Heart left ventricle (tissue), 16 donors: ENCODE measurements at regions of chr16 and their contacts with region 1.

Region 1: GRCh38 chr16:26729951-26730541 is 336.7 kb upstream of the C16orf82 start:
- DNase-seq: no peak
- ATAC-seq: no peak
- H3K4me3 ChIP-seq: no peak overlapping the region
- H3K27ac ChIP-seq: no peak overlapping the region
- H3K4me1 ChIP-seq: peaks cover 0 to 4% (median 0%) of the 10 kb centered on the region in 12 donors
- H3K27me3 ChIP-seq: no peaks in the 10 kb centered on the region
- CTCF ChIP-seq: no peak
- POLR2A ChIP-seq: no peak

Region 2: DNA sequence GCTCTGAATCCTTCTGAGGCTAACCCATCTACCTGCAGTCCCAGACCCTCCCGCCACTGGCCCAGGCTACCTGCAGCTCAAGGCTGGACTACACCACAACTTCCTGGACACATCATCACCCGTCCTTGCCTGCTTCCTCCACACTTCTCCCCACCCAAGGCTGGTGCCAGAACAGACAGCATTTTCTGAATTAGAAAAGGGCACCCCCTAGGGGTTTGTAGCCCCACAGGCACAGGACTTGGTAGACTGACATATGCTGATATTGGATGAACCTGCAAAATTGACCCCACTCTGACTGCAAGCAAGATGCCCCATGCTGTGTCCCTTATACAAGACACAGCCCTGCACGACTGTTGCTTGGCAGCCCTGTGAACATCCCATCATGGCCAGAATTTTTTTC is 65.1 kb after region 1 on chr16:
- intact Hi-C with region 1: loop called in 1 of 10 experiments (anchors 10 kb)
- DNase-seq: no peak
- ATAC-seq: no peak
- H3K4me3 ChIP-seq: no peak overlapping the region
- H3K27ac ChIP-seq: no peak overlapping the region
- H3K4me1 ChIP-seq: no peaks in the 10 kb centered on the region
- H3K27me3 ChIP-seq: peaks cover 0 to 10% (median 0%) of the 10 kb centered on the region in 9 donors
- CTCF ChIP-seq: peak in 8 of 12 donors; percentile 8 to 45 (median 31)
- POLR2A ChIP-seq: no peak